ENCODE measurements at regions of chr17 and their contacts with region 1.

Region 1: DNA sequence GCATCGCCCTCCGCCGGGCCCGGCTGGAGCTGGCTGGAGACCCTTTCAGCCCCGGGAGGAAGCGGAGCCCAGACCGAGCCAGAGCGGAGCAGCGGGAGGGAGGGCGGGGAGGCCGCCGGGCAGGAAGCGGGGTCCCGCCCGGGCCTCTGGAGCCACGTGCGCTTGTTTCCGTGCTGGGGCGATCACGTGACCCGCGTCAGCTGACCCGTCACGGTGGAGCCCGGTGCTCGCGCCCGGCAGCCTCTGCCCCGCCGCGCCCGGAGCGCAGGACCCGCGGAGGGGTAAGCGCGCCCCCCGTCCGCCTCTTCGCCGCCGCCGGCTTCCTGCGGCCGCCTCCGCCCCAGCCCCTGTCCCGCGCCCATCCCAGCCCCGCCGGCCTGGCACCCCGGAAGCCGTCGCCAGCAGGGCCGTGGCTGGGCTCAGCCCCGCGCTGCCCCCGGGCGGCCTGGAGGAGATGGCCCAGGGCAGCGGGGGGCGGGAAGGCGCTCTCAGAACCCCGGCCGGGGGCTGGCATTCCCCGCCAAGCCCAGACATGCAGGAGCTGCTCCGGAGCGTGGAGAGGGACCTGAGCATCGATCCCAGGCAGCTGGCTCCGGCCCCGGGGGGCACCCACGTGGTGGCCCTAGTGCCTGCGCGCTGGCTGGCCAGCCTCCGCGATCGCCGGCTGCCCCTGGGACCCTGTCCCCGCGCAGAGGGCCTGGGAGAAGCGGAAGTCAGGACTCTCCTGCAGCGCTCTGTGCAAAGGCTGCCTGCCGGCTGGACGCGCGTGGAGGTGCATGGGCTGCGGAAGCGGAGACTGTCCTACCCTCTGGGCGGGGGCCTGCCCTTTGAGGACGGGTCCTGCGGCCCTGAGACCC is at the start of gene WDR81:
- DNase-seq: peak; percentile 95
- ATAC-seq: peak; percentile 78
- H3K4me3 Mint-ChIP-seq: peak within 1 kb of the TSS; percentile 72
- H3K27ac Mint-ChIP-seq: peak within 1 kb of the TSS; percentile 80
- H3K4me1 Mint-ChIP-seq: peaks cover 36% of the 10 kb centered on the region
- H3K27me3 Mint-ChIP-seq: no peaks in the 10 kb centered on the region
- CTCF ChIP-seq: no peak
- total RNA-seq, gene WDR81: 7.0 to 8.0 TPM

Region 2: GRCh38 chr17:1673041-1673785 is 51.5 kb before region 1 on chr17:
- CTCF ChIA-PET with region 1: interaction called, 13 read pairs
- POLR2A ChIA-PET with region 1: interaction called, 3 read pairs
- intact Hi-C with region 1: no loop called
- DNase-seq: no peak
- ATAC-seq: peak; percentile 26
- H3K4me3 Mint-ChIP-seq: no peak overlapping the region
- H3K27ac Mint-ChIP-seq: peak overlapping the region; percentile 39
- H3K4me1 Mint-ChIP-seq: peaks cover 16% of the 10 kb centered on the region
- H3K27me3 Mint-ChIP-seq: no peaks in the 10 kb centered on the region
- CTCF ChIP-seq: no peak

Region 3: GRCh38 chr17:1769822-1770477 is 45.2 kb after region 1 on chr17:
- CTCF ChIA-PET with region 1: interaction called, 16 read pairs
- POLR2A ChIA-PET with region 1: interaction called, 6 read pairs
- intact Hi-C with region 1: loop called (anchors 10 kb)
- DNase-seq: peak; percentile 57
- ATAC-seq: peak; percentile 67
- H3K4me3 Mint-ChIP-seq: peak overlapping the region; percentile 72
- H3K27ac Mint-ChIP-seq: peak overlapping the region; percentile 86
- H3K4me1 Mint-ChIP-seq: peaks cover 27% of the 10 kb centered on the region
- H3K27me3 Mint-ChIP-seq: no peaks in the 10 kb centered on the region
- CTCF ChIP-seq: no peak

Region 4: DNA sequence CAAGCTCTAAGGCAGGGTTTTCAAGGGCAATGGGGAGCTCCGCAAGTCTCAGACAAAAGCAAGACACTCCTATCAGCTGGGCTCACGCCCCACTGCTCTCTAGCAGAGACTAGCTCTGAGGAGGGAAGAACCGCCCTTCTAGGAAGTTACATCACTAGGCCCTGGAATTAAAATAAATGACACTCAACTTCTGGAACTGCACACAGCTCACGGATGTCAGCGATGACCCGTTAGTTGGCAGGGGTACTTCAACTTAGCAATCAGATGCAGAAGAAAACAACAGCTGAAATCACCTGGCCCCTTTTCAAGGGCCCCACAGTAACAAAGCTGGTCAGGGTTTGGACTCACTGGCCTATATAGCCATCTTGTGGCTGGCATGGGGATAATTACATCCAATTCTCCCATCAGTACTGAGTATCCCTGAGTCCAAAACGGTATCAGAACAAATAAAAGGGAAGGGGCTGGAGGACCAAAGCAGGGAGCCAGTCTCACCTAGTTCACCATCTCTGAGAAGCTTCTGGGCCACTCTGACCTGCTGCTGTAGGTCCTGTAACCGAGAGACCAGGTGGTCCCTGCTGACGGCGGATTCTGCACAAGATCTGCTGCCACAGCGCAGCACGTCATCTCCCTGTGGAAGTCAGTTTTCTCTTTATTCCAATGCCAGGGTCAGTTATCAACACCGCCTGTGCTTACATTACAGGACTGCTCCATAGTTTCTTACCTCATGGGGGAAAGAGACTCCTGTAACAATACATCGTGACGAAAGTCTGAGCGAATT is 59.3 kb after region 1 on chr17:
- CTCF ChIA-PET with region 1: interaction called, 16 read pairs
- POLR2A ChIA-PET with region 1: interaction called, 3 read pairs
- intact Hi-C with region 1: loop called (anchors 10 kb)
- DNase-seq: no peak
- ATAC-seq: no peak
- H3K4me3 Mint-ChIP-seq: no peak overlapping the region
- H3K27ac Mint-ChIP-seq: no peak overlapping the region
- H3K4me1 Mint-ChIP-seq: no peaks in the 10 kb centered on the region
- H3K27me3 Mint-ChIP-seq: no peaks in the 10 kb centered on the region
- CTCF ChIP-seq: peak; percentile 20

Region 5: GRCh38 chr17:1829592-1830257 is 105.0 kb after region 1 on chr17 and contains the starts of genes RPA1 and SMYD4:
- CTCF ChIA-PET with region 1: interaction called, 11 read pairs
- POLR2A ChIA-PET with region 1: no interaction called
- intact Hi-C with region 1: no loop called
- DNase-seq: peak; percentile 90
- ATAC-seq: peak; percentile 98
- H3K4me3 Mint-ChIP-seq: peak within 1 kb of the TSS; percentile 92
- H3K27ac Mint-ChIP-seq: peak within 1 kb of the TSS; percentile 93
- H3K4me1 Mint-ChIP-seq: peaks cover 59% of the 10 kb centered on the region
- H3K27me3 Mint-ChIP-seq: no peaks in the 10 kb centered on the region
- CTCF ChIP-seq: no peak
- total RNA-seq, gene RPA1: 189 to 197 TPM
- total RNA-seq, gene SMYD4: 22.2 to 22.7 TPM

Region 6: DNA sequence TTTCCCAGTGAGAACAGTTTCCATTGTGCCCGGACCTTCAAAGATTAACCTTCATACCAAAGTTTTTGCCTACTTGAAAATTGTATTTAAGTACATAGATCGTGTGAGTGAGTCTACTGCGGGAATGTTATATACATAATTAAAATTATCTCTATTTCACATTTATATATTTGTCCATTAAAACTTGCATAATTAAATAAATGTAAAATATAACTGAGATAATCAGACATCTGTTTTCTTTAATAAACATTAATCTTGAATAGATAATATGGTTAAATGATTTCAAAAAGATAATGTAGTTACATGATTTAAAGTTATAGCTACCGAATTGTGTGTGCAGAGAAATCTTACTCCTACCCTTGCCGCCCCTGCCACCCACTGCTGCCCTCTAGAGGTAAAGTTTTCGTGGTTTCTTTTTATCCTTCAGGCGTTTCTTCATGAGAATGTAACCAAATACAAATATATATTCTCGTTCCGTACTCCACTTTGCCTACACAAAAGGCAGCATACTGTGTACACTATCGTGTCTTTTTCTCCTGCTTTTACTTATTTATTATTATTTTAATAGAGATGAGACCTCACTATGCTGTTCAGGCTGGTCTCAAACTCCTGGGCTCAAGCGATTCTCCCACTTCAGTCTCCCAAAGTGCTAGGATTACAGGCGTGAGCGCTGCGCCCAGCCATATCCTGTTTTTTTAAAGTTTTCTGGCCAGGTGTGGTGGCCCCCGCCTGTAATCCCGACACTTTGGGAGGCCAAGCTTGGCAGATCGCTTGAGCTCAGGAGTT is 140.7 kb after region 1 on chr17:
- CTCF ChIA-PET with region 1: interaction called, 23 read pairs
- POLR2A ChIA-PET with region 1: no interaction called
- intact Hi-C with region 1: loop called (anchors 5 kb)
- DNase-seq: peak; percentile 64
- ATAC-seq: peak; percentile 60
- H3K4me3 Mint-ChIP-seq: no peak overlapping the region
- H3K27ac Mint-ChIP-seq: no peak overlapping the region
- H3K4me1 Mint-ChIP-seq: peaks cover 18% of the 10 kb centered on the region
- H3K27me3 Mint-ChIP-seq: no peaks in the 10 kb centered on the region
- CTCF ChIP-seq: peak; percentile 79

Region 7: GRCh38 chr17:1870592-1870991 is 145.9 kb after region 1 on chr17:
- CTCF ChIA-PET with region 1: interaction called, 23 read pairs
- POLR2A ChIA-PET with region 1: no interaction called
- intact Hi-C with region 1: loop called (anchors 5 kb)
- DNase-seq: no peak
- ATAC-seq: peak; percentile 77
- H3K4me3 Mint-ChIP-seq: peak overlapping the region; percentile 29
- H3K27ac Mint-ChIP-seq: peak overlapping the region; percentile 92
- H3K4me1 Mint-ChIP-seq: peaks cover 50% of the 10 kb centered on the region
- H3K27me3 Mint-ChIP-seq: no peaks in the 10 kb centered on the region
- CTCF ChIP-seq: no peak